HEK293 (cell line): ENCODE measurements at regions of chr2 and their contacts with region 1.

Region 1: GRCh38 chr2:152036611-152037469 is 62.0 kb downstream of the CACNB4 start:
- H3K4me3 ChIP-seq: no peak overlapping the region
- H3K27ac ChIP-seq: no peak overlapping the region
- H3K4me1 ChIP-seq: no peaks in the 10 kb centered on the region
- CTCF ChIP-seq: peak; percentile 70

Region 2: GRCh38 chr2:152047819-152048471 is 11.1 kb after region 1 on chr2:
- CTCF ChIA-PET with region 1: interaction called, 20 read pairs
- POLR2A ChIA-PET with region 1: no interaction called
- H3K4me3 ChIP-seq: no peak overlapping the region
- H3K27ac ChIP-seq: no peak overlapping the region
- H3K4me1 ChIP-seq: no peaks in the 10 kb centered on the region
- CTCF ChIP-seq: no peak

Region 3: DNA sequence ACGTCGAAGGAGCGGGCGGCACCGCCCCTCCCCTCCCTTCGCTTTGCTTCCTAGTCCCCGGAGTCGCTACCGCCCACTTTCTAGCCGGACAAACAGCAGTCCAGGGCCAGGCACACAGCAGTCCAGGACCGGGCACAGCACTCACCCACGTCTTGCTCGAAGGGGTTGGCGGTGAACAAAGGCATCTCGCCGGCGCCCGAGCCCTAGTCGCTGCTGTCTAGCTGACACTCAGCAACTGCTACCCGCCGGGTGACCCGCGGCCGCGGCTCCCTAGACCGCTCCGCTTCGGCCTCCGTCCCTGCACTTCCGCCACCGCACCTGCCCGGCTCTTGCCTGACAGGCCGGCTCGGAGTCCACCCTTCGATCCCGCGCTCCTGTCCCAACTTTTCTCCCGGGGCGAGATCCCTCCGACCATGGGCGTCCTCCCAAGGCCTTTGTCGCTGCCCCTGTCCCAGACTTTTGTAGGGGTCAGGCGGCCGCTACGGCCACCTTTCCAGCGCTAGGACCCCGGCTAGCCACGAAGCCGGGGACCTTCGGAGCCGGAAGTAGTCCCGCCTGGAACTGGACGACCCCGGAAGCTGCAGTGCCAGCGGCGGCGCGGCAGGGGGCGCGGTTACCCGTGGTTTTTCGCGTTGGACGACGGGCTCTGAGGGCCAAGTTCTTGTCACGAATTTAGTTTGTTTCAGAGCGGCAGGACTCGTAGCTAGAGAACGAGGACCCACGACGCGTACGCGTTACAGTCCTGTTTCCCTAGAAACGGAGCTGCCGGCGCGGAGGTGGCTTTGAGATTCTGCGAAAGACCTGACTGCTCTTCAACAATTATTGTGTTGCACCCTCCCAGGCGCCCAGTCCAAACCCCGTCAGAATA is 138.9 kb after region 1 on chr2 and contains the start of gene STAM2:
- CTCF ChIA-PET with region 1: interaction called, 17 read pairs
- POLR2A ChIA-PET with region 1: interaction called, 14 read pairs
- H3K4me3 ChIP-seq: peak within 1 kb of the TSS; percentile 74
- H3K27ac ChIP-seq: peak within 1 kb of the TSS; percentile 89
- H3K4me1 ChIP-seq: peaks cover 3% of the 10 kb centered on the region; the same call in 1 of the 2 replicates
- CTCF ChIP-seq: peak; percentile 97